Transverse colon (tissue), 4 donors: ENCODE measurements at regions of chr12 and their contacts with region 1.

Region 1: DNA sequence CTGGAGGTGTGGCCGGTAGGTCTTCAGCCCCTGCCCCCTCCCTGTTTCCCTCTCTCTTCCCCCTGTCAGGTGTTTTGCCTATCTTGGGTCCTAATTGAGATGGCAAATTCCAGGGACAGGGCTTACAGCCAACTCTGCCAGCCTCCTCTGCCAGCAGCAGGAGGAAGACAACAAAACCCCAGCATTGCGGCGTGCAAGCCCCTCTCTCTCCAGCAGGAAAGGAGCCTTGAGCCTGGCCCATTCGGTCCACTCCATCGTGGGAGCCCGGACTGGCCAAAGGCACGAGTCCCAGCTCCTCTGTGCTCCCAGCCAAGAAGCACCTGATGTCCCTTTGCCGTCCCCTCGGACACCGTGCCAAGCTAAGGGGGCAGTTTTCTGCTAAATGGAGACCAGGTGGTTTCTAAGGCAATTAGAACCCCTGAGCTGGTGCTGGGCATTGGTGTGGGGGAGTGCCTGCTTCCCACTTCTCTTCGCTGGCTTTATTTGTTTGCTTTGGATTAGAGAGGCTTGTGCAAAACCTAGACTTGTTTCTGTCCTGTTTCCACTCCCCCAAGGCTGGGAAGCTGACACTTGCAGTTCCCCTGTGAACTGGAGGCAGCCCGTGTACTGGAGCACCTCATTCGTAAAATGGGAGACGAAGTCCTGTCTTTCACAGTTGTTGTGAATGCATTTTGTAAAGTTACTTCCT is 57.1 kb upstream of the LHX5 start:
- DNase-seq: no peak
- H3K4me3 ChIP-seq: no peak overlapping the region
- H3K27ac ChIP-seq: no peak overlapping the region
- H3K4me1 ChIP-seq: no peaks in the 10 kb centered on the region
- H3K27me3 ChIP-seq: peaks cover 37% of the 10 kb centered on the region
- CTCF ChIP-seq: no peak
- EP300 ChIP-seq: no peak
- POLR2A ChIP-seq: no peak

Region 2: DNA sequence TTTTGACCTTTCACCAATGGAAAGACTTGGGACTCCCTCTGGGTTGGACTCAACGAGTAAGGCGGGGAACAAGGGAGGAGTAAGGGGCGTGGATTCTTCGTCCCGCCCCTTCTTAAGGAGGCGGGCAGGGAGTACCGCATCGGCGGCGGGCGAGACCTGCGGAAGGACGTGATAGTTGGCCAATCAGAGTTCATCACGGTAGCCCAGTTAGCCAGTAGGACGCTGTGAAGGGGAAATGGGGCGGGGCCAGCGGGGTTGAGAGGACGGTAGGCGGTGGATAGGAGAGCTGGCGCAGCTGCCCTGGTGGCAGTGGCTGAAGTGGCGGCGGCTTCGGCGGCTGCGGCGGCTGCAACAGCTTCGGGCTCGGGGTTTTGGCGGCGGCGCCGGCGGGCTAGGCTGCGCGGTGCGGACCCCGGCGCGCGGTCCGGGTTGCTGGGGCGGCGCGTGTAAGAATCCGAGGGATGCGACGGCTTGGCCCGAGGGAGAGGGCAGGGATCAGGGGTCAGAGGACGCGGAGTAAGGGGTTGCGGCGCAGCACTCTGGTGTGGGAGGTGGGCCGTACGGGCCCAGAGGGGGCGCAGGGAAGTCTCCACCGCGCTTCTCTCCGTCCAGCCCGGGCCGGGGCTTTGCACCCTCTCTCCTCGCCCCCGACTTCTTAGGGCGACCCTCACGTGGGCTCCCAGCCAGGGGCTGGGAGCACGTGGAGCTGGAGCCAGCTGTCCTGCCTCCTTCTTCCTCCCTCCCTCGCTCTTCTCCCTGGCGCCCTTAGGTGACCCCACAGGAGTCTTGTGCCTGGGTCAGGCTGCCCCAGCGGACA is 307.4 kb before region 1 on chr12 and contains the start of gene TPCN1:
- in situ Hi-C with region 1: no loop called
- intact Hi-C with region 1: no loop called
- DNase-seq: peak; percentile 100
- H3K4me3 ChIP-seq: peak within 1 kb of the TSS; percentile 70 to 78 (median 74)
- H3K27ac ChIP-seq: peak within 1 kb of the TSS; percentile 93 to 99 (median 96)
- H3K4me1 ChIP-seq: peaks cover 16 to 49% (median 39%) of the 10 kb centered on the region in 4 donors
- H3K27me3 ChIP-seq: no peaks in the 10 kb centered on the region
- CTCF ChIP-seq: peak in 1 of 5 experiments; percentile 39
- EP300 ChIP-seq: no peak
- POLR2A ChIP-seq: peak; percentile 98
- total RNA-seq, gene TPCN1: 85.1 to 1,315 (median 121) TPM

Region 3: GRCh38 chr12:113471619-113472171 is 57.1 kb before region 1 on chr12 and contains the start of gene LHX5:
- in situ Hi-C with region 1: no loop called
- intact Hi-C with region 1: loop called (anchors 1 kb)
- DNase-seq: no peak
- H3K4me3 ChIP-seq: no peak within 1 kb of the TSS
- H3K27ac ChIP-seq: no peak within 1 kb of the TSS
- H3K4me1 ChIP-seq: peaks cover 0 to 17% (median 13%) of the 10 kb centered on the region in 4 donors
- H3K27me3 ChIP-seq: peaks cover 100% of the 10 kb centered on the region
- CTCF ChIP-seq: no peak
- EP300 ChIP-seq: no peak
- POLR2A ChIP-seq: no peak
- total RNA-seq, gene LHX5: not detected